PC-3 (cell line): ENCODE measurements at regions of chr11 and their contacts with region 1.

Region 1: GRCh38 chr11:126211235-126212088 is at the starts of genes FAM118B and RPUSD4:
- DNase-seq: peak; percentile 98
- ATAC-seq: peak; percentile 92
- H3K4me3 ChIP-seq: peak within 1 kb of the TSS; percentile 77
- H3K27ac ChIP-seq: peak within 1 kb of the TSS; percentile 24
- H3K4me1 ChIP-seq: peaks cover 20% of the 10 kb centered on the region
- H3K27me3 ChIP-seq: no peaks in the 10 kb centered on the region
- CTCF ChIP-seq: no peak
- total RNA-seq, gene FAM118B: 17.0 and 24.3 TPM in 2 replicates
- total RNA-seq, gene RPUSD4: 39.7 and 40.2 TPM in 2 replicates

Region 2: GRCh38 chr11:126163074-126163700 is 48.3 kb before region 1 on chr11:
- CTCF ChIA-PET with region 1: no interaction called
- POLR2A ChIA-PET with region 1: no interaction called
- intact Hi-C with region 1: no loop called
- DNase-seq: peak; percentile 39
- ATAC-seq: 0 out of 2 replicates have a peak, but pooled peaks have one; percentile 25
- H3K4me3 ChIP-seq: no peak overlapping the region
- H3K27ac ChIP-seq: no peak overlapping the region
- H3K4me1 ChIP-seq: no peaks in the 10 kb centered on the region
- H3K27me3 ChIP-seq: no peaks in the 10 kb centered on the region
- CTCF ChIP-seq: no peak

Region 3: DNA sequence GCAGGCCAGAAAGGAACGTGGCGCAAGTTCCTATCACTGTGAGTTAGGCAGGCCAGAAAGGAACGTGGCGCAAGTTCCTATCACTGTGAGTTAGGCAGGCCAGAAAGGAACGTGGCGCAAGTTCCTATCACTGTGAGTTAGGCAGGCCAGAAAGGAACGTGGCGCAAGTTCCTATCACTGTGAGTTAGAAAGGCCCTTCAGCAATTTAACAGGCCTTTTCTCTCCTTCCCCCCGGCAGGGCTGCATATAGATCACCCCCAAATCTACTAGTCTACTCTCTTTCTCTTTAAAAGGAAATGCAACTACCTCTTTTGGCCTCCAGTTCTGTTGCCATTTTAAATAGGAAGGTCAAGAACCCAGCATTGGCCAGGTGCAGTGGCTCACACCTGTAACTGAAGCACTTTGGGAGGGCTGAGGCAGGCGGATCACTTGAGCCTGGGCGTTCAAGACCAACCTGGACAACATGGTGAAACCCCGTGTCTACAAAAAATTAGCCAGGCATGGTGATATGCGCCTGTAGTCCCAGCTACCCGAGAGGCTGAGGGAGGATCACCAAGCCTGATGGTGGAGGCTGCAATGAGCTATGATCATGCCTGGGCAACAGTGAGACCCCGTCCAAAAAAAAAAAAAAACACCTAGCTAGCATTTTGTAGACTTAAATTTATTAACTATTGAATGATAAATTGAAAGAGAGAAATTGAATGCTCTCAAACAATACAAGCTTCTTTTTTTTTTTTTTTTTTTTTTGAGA is 15.0 kb after region 1 on chr11:
- CTCF ChIA-PET with region 1: no interaction called
- POLR2A ChIA-PET with region 1: interaction called, 23 read pairs
- intact Hi-C with region 1: no loop called
- DNase-seq: no peak
- ATAC-seq: no peak
- H3K4me3 ChIP-seq: no peak overlapping the region
- H3K27ac ChIP-seq: no peak overlapping the region
- H3K4me1 ChIP-seq: peaks cover 4% of the 10 kb centered on the region
- H3K27me3 ChIP-seq: no peaks in the 10 kb centered on the region
- CTCF ChIP-seq: no peak

Region 4: DNA sequence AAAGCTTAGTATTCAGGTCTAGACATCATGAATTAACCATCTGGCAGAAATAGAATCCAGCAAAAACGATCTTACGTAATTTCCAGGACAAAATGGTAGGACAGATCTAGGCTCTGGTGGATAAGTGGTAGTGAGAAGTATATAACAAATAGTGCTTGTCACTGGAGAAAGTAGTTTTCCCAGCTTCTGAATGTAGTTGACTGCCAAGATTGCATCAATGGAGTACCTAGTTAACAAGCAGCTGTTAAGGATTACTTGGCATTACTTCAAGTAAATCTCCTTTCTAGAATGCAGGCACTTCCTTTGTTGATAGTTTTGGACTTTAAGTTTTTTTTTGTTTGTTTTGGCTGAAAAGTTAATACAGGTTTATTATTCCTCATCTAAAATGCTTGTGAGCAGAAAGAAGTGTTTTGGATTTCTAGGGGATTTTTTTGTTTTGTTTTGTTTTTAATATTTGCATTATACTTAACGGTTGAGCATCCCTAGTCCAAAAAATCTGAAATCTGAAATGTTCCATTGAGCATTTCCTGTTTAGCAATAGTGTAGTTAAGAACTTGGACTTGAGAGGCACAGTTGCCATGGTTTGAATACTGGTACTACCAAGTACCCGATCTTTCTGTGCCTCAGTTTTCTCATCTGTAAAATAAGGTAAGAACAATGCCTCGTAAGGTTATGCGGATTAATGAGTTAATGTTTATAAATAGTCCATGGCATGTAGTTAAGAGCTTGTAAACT is 20.4 kb after region 1 on chr11:
- CTCF ChIA-PET with region 1: no interaction called
- POLR2A ChIA-PET with region 1: interaction called, 23 read pairs
- intact Hi-C with region 1: loop called (anchors 2 kb)
- DNase-seq: peak; percentile 59
- ATAC-seq: peak; percentile 52
- H3K4me3 ChIP-seq: no peak overlapping the region
- H3K27ac ChIP-seq: peak overlapping the region; percentile 38
- H3K4me1 ChIP-seq: peaks cover 30% of the 10 kb centered on the region
- H3K27me3 ChIP-seq: no peaks in the 10 kb centered on the region
- CTCF ChIP-seq: no peak

Region 5: GRCh38 chr11:126268708-126269579 is 57.5 kb after region 1 on chr11 and contains the starts of genes FOXRED1 and SRPRA:
- CTCF ChIA-PET with region 1: no interaction called
- POLR2A ChIA-PET with region 1: interaction called, 4 read pairs
- intact Hi-C with region 1: loop called (anchors 1 kb)
- DNase-seq: peak; percentile 100
- ATAC-seq: peak; percentile 96
- H3K4me3 ChIP-seq: peak within 1 kb of the TSS; percentile 96
- H3K27ac ChIP-seq: peak within 1 kb of the TSS; percentile 61
- H3K4me1 ChIP-seq: peaks cover 10% of the 10 kb centered on the region
- H3K27me3 ChIP-seq: no peaks in the 10 kb centered on the region
- CTCF ChIP-seq: no peak
- total RNA-seq, gene FOXRED1: 55.6 and 72.0 TPM in 2 replicates
- total RNA-seq, gene SRPRA: 140 and 143 TPM in 2 replicates

Region 6: GRCh38 chr11:126282736-126283591 is 71.5 kb after region 1 on chr11 and contains the start of gene TIRAP:
- CTCF ChIA-PET with region 1: no interaction called
- POLR2A ChIA-PET with region 1: no interaction called
- intact Hi-C with region 1: loop called (anchors 2 kb)
- DNase-seq: peak; percentile 59
- ATAC-seq: peak; percentile 74
- H3K4me3 ChIP-seq: peak within 1 kb of the TSS; percentile 82
- H3K27ac ChIP-seq: peak within 1 kb of the TSS; percentile 84
- H3K4me1 ChIP-seq: peaks cover 30% of the 10 kb centered on the region; the same call in 1 of the 2 replicates
- H3K27me3 ChIP-seq: no peaks in the 10 kb centered on the region
- CTCF ChIP-seq: no peak
- total RNA-seq, gene TIRAP: 8.4 and 12.1 TPM in 2 replicates

Region 7: DNA sequence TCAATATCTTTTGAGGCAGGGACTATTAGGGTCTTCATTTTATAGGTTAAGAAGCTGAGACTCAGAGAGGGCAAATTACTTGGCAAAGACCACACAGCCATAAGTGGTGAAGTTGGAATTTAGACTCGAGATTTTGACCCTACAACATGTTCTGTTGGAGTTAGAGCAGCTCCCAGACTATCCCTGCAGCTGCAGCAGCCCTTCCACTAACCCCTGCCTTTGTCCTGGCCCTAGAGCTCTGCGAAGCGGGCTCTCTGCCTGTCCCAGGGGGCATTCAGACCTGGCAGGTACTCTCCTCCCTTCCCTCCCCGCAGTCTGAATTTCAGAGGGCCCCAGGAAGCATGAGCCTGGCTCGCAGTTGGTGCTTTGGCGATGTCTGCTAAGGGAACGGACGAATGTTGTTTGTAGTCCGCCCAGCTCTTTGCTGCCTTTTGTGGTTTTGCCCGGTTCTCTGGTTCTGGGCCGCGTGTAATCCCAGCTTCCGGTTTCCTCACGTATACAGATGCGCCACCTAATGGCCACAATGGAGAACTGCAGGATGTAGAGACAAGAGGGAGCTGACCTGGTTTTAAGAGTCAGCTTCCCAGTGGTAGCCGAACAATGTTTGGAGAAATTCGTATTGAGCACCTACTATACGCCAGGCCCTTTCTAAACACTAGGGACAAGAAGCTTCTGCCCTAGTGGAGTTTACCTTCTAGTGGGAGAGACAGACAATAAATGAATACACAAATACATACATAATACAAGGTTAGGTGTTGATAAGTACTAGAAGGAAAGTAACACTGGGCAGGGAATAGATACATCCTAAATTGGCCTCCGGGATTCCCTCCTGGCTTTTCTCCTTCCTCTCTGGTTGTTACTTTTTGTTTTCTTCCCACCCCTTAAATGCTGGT is 269.2 kb after region 1 on chr11:
- CTCF ChIA-PET with region 1: no interaction called
- POLR2A ChIA-PET with region 1: no interaction called
- intact Hi-C with region 1: loop called (anchors 10 kb)
- DNase-seq: peak; percentile 93
- ATAC-seq: peak; percentile 74
- H3K4me3 ChIP-seq: peak overlapping the region; percentile 30; the same call in 1 of the 2 replicates
- H3K27ac ChIP-seq: no peak overlapping the region
- H3K4me1 ChIP-seq: peaks cover 15% of the 10 kb centered on the region
- H3K27me3 ChIP-seq: no peaks in the 10 kb centered on the region
- CTCF ChIP-seq: peak; percentile 98